ENCODE measurements at regions of chr6 and their contacts with region 1.

Region 1: GRCh38 chr6:149834513-149835481 is 29.4 kb downstream of the LRP11 start:
- H3K4me3 ChIP-seq: no peak overlapping the region
- H3K27ac ChIP-seq: no peak overlapping the region
- H3K4me1 ChIP-seq: no peaks in the 10 kb centered on the region
- CTCF ChIP-seq: peak; percentile 63; the same call in 1 of the 2 replicates

Region 2: DNA sequence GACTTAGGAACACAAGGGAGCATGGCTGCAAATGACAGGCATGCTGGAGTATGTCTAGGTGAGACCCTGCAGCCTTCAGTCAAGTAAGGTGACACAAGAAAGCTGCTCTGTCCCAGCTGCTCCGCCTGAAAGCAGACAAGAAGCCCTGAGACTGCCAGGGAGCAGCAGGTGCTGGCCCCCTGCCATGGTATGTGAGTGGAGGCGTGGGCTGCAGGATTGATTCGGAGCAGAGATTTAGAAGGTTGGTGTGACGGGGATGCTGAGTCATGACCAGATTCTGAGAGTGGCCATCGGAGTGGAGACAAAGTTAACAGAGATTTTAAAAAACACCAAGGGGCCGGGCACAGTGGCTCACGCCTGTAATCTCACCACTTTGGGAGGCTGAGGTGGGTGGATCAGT is 11.5 kb after region 1 on chr6:
- CTCF ChIA-PET with region 1: interaction called, 49 read pairs
- POLR2A ChIA-PET with region 1: interaction called, 5 read pairs
- H3K4me3 ChIP-seq: no peak overlapping the region
- H3K27ac ChIP-seq: no peak overlapping the region
- H3K4me1 ChIP-seq: peaks cover 16% of the 10 kb centered on the region
- CTCF ChIP-seq: no peak

Region 3: DNA sequence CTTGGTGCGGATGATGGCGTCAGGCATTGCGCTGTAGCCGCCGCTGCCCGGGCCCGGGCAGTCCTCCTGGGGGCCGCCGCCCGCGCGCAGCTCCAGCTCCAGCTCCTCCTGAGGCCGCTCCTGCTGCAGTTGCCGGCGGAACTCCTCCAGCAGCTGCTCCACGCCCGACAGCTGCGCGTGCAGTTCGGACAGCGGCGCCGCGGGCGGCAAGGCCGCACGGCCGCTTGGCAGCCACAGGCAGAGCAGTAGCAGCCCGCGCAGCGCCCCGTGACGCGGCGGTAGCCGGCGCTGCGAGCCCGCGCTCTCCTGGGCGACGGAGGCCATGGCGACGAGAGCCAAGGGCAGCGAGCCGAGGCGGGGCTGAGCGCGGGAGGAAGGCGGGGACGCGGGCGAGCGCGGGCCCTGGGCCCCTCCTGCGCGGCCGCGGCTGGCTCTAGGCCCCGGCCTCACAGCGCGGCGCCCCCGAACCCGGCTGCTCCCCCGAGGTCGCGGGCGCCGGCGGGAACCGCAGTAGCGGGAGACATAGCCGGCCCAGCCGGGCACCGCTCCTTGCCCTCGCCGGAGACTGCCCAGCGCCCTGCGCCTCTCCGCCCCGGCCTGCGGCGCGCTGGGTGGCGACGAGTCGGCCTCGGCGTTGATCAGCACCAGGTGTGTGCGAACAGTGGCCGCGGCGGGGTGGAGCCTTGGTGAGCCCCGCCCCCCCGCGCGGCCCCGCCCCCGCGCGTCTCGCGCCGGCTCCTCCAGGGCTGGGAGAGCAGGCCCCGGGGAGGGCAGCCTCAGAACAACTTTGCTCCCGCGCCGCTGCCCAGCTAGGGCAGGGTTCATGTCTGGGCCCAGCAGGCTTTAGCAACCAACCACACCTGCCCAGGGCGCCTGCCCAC is 29.1 kb after region 1 on chr6 and contains the start of gene LRP11:
- CTCF ChIA-PET with region 1: interaction called, 56 read pairs
- POLR2A ChIA-PET with region 1: interaction called, 15 read pairs
- H3K4me3 ChIP-seq: peak within 1 kb of the TSS; percentile 81
- H3K27ac ChIP-seq: peak within 1 kb of the TSS; percentile 93
- H3K4me1 ChIP-seq: peaks cover 29% of the 10 kb centered on the region
- CTCF ChIP-seq: no peak

Region 4: DNA sequence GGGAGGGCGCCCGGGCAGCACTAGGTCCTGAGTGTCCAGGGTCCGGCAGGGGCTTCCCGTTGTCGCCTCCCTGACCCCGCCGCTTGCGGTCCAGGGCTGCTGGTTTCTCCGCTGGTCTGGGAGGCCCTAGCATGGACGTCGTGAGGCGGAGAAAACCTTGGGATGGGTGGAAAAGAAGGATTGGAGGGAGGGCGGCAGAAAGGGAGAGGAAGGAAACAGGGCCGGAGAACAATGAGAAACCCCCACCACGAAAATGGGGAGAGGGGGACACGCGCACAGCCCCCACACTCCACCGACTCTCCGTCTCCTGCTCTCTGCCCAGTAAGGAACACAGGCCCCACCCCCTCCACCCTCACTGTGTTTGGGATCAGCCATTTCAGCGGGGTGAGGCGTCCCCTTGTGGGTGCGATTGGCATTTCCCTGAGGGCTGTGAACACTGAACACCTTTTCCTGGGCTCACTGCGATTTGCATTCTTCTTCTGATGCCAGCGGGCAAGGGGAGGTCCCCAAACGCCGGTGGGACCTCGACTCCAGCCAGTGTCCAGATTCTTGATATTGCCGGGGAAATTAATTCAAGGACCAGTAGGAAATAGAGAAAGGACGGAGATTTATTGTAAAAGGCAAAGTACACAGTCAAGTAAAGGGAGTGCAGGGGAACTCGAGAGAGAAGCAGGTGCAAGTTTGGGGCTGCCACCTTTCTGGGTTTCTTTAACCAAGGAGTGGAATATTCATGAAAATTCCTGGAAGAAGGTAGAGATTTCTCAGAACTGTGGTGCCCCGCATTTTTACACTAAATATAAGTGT is 91.4 kb after region 1 on chr6:
- CTCF ChIA-PET with region 1: interaction called, 45 read pairs
- POLR2A ChIA-PET with region 1: no interaction called
- H3K4me3 ChIP-seq: peak overlapping the region; percentile 38
- H3K27ac ChIP-seq: no peak overlapping the region
- H3K4me1 ChIP-seq: no peaks in the 10 kb centered on the region
- CTCF ChIP-seq: peak; percentile 86

Region 5: GRCh38 chr6:149988550-149989346 is 154.0 kb after region 1 on chr6:
- CTCF ChIA-PET with region 1: no interaction called
- POLR2A ChIA-PET with region 1: no interaction called
- H3K4me3 ChIP-seq: no peak overlapping the region
- H3K27ac ChIP-seq: no peak overlapping the region
- H3K4me1 ChIP-seq: peaks cover 6% of the 10 kb centered on the region
- CTCF ChIP-seq: no peak

Measured in HEK293 (cell line).